Activated CD4-positive, alpha-beta T cell treated with anti-CD3 and anti-CD28 coated beads for 36 hours (primary cell): ENCODE measurements at regions of chr1 and their contacts with region 1.

Region 1: DNA sequence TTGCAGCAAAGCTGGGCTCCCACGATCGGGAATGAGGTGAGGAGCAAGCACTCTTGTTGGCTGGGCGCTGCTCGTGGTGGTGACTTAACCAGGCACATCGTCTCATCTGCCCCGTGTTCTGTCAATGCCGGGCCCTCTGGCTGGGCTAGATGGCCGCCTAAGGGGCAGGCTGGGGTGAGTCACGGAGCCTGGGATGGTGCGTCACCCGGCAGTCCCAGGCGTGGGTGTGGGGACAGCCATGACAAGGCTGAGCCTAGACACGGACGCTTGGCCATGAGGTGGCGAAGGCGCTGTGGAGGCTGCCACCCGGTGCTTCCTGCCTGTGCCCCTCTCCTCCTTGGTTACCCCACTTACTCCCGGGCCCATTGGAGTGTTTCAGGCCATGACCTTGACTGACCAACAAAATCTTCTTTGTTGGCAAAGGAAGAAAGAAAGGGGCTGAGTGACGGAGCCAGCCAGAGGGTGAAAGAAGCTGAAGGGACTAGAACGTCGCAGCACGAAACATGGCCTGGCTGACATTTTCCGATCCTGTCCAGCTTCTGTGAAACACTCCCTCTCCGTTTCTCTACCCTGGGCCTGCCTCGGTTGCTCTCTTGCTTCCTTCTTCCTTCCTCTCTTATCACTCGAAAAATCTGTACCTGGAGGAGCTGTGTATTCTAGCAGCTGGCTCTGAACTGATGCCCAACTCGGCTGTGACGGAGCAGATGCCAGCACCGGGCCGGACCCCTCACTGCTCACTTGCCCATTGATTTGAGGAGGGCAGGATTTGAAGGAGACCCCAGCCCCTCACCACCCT is 596 bp downstream of the CD247 start:
- DNase-seq: peak; percentile 97
- ATAC-seq: peak; percentile 88
- H3K4me3 Mint-ChIP-seq: peak overlapping the region; percentile 90
- H3K27ac Mint-ChIP-seq: peak overlapping the region; percentile 99
- H3K4me1 Mint-ChIP-seq: peaks cover 43% of the 10 kb centered on the region
- H3K27me3 Mint-ChIP-seq: no peaks in the 10 kb centered on the region

Region 2: GRCh38 chr1:167447521-167448136 is 70.1 kb before region 1 on chr1:
- CTCF ChIA-PET with region 1: interaction called, 13 read pairs
- POLR2A ChIA-PET with region 1: interaction called, 15 read pairs
- intact Hi-C with region 1: loop called (anchors 1 kb)
- DNase-seq: peak; percentile 87
- ATAC-seq: peak; percentile 86
- H3K4me3 Mint-ChIP-seq: peak overlapping the region; percentile 56
- H3K27ac Mint-ChIP-seq: peak overlapping the region; percentile 94
- H3K4me1 Mint-ChIP-seq: peaks cover 86% of the 10 kb centered on the region
- H3K27me3 Mint-ChIP-seq: no peaks in the 10 kb centered on the region

Region 3: DNA sequence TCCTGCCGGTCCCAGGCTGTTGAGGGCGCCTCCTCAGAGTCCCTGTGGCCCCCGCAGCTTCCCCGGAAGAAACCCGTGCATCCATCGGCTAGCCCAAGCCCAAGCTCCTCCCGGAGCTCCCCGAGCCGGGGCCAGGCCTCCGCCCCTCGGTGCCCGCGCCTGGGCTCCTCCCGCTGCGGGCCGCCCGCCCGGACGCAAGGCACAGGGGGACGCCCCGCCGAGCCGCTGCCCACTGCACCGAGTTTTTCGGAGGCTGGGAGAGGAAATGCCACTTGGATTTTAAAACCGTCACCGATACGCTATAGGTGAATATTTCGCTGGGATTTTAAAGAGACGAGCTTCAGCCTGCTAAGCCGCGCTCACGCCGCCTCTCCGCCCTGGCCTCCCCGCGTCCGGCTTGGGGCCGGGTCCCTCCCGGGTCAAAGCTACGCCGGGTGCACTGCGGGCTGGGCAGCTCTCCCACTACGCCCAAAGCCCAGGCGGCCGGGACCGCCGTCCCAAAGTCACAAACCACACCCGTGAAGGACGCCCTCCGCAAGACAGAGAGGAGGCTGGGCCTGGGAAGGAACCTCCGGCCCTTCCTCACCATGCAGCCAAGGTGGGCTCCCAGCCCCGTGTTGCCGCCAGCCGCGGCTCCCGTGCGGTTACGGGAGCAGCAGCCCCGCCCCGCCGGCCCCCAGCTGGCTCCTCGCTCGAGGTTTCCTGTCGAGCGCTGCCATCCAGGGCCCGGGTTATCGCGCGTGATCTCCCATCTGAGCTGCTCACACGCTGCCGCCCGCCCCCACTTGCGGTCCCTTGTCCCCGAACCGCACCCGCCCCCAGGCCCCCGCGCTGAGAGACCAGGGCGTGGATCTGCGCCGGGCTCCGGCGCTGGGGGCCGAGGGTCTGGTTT is 62.6 kb before region 1 on chr1:
- CTCF ChIA-PET with region 1: interaction called, 28 read pairs
- POLR2A ChIA-PET with region 1: interaction called, 16 read pairs
- intact Hi-C with region 1: loop called (anchors 2 kb)
- DNase-seq: peak; percentile 88
- ATAC-seq: peak; percentile 58
- H3K4me3 Mint-ChIP-seq: peak overlapping the region; percentile 75
- H3K27ac Mint-ChIP-seq: peak overlapping the region; percentile 86
- H3K4me1 Mint-ChIP-seq: peaks cover 78% of the 10 kb centered on the region
- H3K27me3 Mint-ChIP-seq: no peaks in the 10 kb centered on the region

Region 4: GRCh38 chr1:167486090-167486824 is 31.5 kb before region 1 on chr1:
- CTCF ChIA-PET with region 1: interaction called, 12 read pairs
- POLR2A ChIA-PET with region 1: interaction called, 4 read pairs
- intact Hi-C with region 1: loop called in 1 of 2 experiments (anchors 5 kb)
- DNase-seq: peak; percentile 42
- ATAC-seq: no peak
- H3K4me3 Mint-ChIP-seq: peak overlapping the region; percentile 45
- H3K27ac Mint-ChIP-seq: peak overlapping the region; percentile 89
- H3K4me1 Mint-ChIP-seq: peaks cover 96% of the 10 kb centered on the region
- H3K27me3 Mint-ChIP-seq: no peaks in the 10 kb centered on the region

Region 5: GRCh38 chr1:167491586-167492461 is 25.9 kb before region 1 on chr1:
- CTCF ChIA-PET with region 1: interaction called, 12 read pairs
- POLR2A ChIA-PET with region 1: interaction called, 4 read pairs
- intact Hi-C with region 1: loop called (anchors 1 kb)
- DNase-seq: peak; percentile 66
- ATAC-seq: peak; percentile 41
- H3K4me3 Mint-ChIP-seq: peak overlapping the region; percentile 55
- H3K27ac Mint-ChIP-seq: peak overlapping the region; percentile 92
- H3K4me1 Mint-ChIP-seq: peaks cover 96% of the 10 kb centered on the region
- H3K27me3 Mint-ChIP-seq: no peaks in the 10 kb centered on the region